Activated B cell treated with CpG ODN at 0.5 μM for 24 hours (primary cell): ENCODE measurements at regions of chr2 and their contacts with region 1.

Region 1: GRCh38 chr2:97919858-97920257 is 75.9 kb downstream of the TMEM131 start:
- DNase-seq: no peak
- ATAC-seq: no peak
- H3K4me3 Mint-ChIP-seq: no peak overlapping the region
- H3K27ac Mint-ChIP-seq: no peak overlapping the region
- H3K4me1 Mint-ChIP-seq: peaks cover 53% of the 10 kb centered on the region
- H3K27me3 Mint-ChIP-seq: no peaks in the 10 kb centered on the region
- CTCF ChIP-seq: no peak

Region 2: DNA sequence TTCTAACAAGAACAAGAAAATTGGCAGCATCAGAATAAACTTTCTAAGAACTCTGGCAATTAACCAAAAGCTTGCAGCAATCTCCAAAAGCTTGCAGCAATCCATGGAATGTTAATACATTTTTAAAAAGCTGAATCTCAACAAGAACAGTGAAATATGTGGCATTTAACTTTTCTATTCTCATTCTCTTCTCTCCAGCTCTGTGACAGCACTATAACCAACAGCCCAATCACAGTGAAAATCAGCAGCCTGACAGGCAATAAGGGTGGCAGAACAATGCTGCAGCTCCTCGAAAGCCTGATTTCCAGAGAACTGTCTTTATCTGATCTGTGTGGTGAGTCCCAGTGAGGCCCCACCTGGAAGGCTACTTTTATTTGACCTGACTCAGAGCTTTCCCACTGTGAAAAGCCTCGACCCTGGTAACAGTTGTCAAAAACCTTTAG is 15.9 kb after region 1 on chr2:
- CTCF ChIA-PET with region 1: no interaction called
- POLR2A ChIA-PET with region 1: interaction called, 12 read pairs
- intact Hi-C with region 1: no loop called
- DNase-seq: no peak
- ATAC-seq: no peak
- H3K4me3 Mint-ChIP-seq: peak overlapping the region; percentile 56
- H3K27ac Mint-ChIP-seq: peak overlapping the region; percentile 65
- H3K4me1 Mint-ChIP-seq: peaks cover 96% of the 10 kb centered on the region
- H3K27me3 Mint-ChIP-seq: no peaks in the 10 kb centered on the region
- CTCF ChIP-seq: no peak

Region 3: GRCh38 chr2:98063291-98063854 is 143.5 kb after region 1 on chr2:
- CTCF ChIA-PET with region 1: no interaction called
- POLR2A ChIA-PET with region 1: no interaction called
- intact Hi-C with region 1: no loop called
- DNase-seq: no peak
- ATAC-seq: no peak
- H3K4me3 Mint-ChIP-seq: no peak overlapping the region
- H3K27ac Mint-ChIP-seq: no peak overlapping the region
- H3K4me1 Mint-ChIP-seq: no peaks in the 10 kb centered on the region
- H3K27me3 Mint-ChIP-seq: peaks cover 1% of the 10 kb centered on the region
- CTCF ChIP-seq: no peak